ENCODE measurements at regions of chr19 and their contacts with region 1.

Region 1: GRCh38 chr19:20776083-20777076 is at the start of gene ZNF66:
- DNase-seq: peak; percentile 98
- total RNA-seq, gene ZNF66: 0.81 TPM

Region 2: GRCh38 chr19:20287070-20287469 is 489.3 kb before region 1 on chr19:
- intact Hi-C with region 1: no loop called
- DNase-seq: no peak

Region 3: GRCh38 chr19:20333508-20333907 is 442.9 kb before region 1 on chr19:
- intact Hi-C with region 1: no loop called
- DNase-seq: no peak

Region 4: DNA sequence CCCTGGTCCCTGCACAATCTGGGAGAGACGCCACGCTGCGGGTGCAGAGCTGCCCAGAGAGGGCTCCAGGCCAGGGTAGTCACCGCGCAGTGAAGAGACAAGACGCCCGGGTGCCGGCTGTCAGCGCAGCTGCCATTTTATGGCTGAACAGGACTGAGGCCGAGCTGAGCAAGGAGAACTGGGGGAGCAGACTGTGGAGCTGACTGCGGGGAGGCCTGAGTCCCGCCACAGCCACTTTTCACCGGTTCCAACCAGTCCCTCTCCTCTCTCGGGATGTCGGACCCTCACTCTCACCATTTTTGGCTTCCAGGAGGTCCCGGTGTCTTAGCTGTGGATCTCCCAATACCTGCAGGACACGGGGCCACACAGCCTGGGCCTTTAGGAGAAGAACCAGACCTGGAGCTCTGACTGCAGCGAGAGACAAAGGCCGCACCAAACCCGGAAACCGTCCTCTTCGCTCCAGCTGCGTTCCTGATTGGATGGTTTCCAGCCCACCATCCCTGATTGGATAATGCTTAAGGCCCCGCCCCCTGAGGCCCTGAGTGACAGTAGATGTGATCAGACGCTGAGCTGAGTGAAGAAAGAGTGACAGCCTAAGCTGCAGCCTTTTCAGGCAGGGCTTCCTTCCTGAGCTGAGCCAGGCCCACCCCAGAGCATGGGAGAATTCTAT is 115.1 kb before region 1 on chr19 and contains the start of gene ZNF626:
- intact Hi-C with region 1: loop called (anchors 10 kb)
- DNase-seq: peak; percentile 96
- total RNA-seq, gene ZNF626: 8.6 TPM

Measured in cardiac septum (tissue), 1 donor.